ENCODE measurements at regions of chr11 and their contacts with region 1.

Region 1: GRCh38 chr11:8263769-8264410 is at the start of gene LMO1:
- DNase-seq: peak; percentile 81
- H3K4me3 ChIP-seq: no peak within 1 kb of the TSS
- H3K27ac ChIP-seq: no peak within 1 kb of the TSS
- H3K4me1 ChIP-seq: peaks cover 3% of the 10 kb centered on the region
- H3K27me3 ChIP-seq: peaks cover 97% of the 10 kb centered on the region
- CTCF ChIP-seq: peak; percentile 81
- total RNA-seq, gene LMO1: not detected in 2 replicates

Region 2: GRCh38 chr11:8201644-8202365 is 62.1 kb before region 1 on chr11:
- CTCF ChIA-PET with region 1: no interaction called
- POLR2A ChIA-PET with region 1: no interaction called
- intact Hi-C with region 1: no loop called
- DNase-seq: no peak
- H3K4me3 ChIP-seq: no peak overlapping the region
- H3K27ac ChIP-seq: no peak overlapping the region
- H3K4me1 ChIP-seq: no peaks in the 10 kb centered on the region
- H3K27me3 ChIP-seq: peaks cover 11% of the 10 kb centered on the region
- CTCF ChIP-seq: no peak

Region 3: GRCh38 chr11:8225589-8226036 is 38.3 kb before region 1 on chr11:
- CTCF ChIA-PET with region 1: interaction called, 4 read pairs
- POLR2A ChIA-PET with region 1: no interaction called
- intact Hi-C with region 1: loop called (anchors 2 kb)
- DNase-seq: peak; percentile 65
- H3K4me3 ChIP-seq: no peak overlapping the region
- H3K27ac ChIP-seq: no peak overlapping the region
- H3K4me1 ChIP-seq: no peaks in the 10 kb centered on the region
- H3K27me3 ChIP-seq: peaks cover 7% of the 10 kb centered on the region
- CTCF ChIP-seq: peak; percentile 87

Region 4: DNA sequence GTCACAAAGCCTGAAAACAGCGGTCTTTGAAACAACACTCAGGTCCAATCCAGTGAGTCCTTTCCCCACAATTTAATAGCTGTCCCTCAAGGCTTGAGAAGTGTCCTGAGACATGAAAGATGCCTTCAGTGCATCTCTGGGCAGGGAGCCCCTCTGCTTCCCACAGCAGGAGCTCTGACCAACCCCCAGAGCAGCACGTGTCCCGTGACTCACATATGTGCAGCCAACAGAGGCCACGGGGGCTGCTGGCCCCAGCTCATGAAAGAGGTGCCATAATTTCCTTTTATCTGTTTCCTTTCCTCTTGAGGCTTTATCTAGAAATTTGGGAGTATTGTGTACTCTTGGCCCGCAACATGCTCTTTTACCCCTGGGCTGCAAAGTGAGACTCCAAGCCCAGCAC is 33.0 kb after region 1 on chr11:
- CTCF ChIA-PET with region 1: interaction called, 12 read pairs
- POLR2A ChIA-PET with region 1: no interaction called
- intact Hi-C with region 1: no loop called
- DNase-seq: no peak
- H3K4me3 ChIP-seq: no peak overlapping the region
- H3K27ac ChIP-seq: no peak overlapping the region
- H3K4me1 ChIP-seq: no peaks in the 10 kb centered on the region
- H3K27me3 ChIP-seq: peaks cover 72% of the 10 kb centered on the region
- CTCF ChIP-seq: no peak

Measured in A673 (cell line).